ENCODE measurements at regions of chr4 and their contacts with region 1.

Region 1: DNA sequence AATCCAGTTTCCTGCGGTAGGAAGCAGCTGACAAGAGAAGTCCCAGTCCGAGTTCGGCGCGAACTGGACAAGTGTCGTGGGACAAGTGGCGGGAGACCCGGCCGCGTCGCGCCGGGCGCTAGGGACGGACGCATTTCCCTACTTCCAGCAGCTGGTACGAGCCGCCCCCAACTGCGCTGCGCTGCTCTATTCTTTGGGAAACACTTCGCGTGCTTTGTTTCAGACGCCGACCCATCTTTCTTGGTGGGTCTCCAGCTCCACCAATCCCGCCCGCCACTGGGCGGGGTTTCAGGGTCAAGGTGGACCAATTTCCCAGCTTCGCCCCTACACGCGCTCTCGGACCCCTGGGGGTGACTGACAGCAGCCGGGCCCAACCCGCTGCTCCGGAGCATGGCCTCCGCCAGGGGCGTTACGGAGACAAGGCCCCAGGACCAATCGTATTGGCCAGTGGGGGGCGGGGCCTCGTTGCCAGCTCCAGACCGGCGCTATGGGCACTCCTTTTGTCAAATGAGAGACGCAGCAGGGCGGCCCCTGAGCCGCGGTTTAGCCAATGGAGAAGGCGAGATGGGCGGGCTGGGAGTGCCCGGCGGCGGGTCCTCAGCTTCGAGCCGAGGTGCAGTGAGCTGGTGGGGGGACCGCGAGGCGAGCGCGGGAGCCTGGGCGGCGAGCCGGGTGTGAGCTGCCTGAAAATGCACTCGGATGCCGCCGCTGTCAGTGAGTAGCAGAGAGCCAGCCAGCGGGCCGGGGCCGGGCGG is at the start of gene DCUN1D4:
- DNase-seq: peak; percentile 99
- H3K4me3 ChIP-seq: peak within 1 kb of the TSS; percentile 78
- H3K27ac ChIP-seq: peak within 1 kb of the TSS; percentile 63
- H3K4me1 ChIP-seq: peaks cover 16% of the 10 kb centered on the region
- CTCF ChIP-seq: no peak
- total RNA-seq, gene DCUN1D4: 21.3 and 30.4 TPM in 2 replicates

Region 2: DNA sequence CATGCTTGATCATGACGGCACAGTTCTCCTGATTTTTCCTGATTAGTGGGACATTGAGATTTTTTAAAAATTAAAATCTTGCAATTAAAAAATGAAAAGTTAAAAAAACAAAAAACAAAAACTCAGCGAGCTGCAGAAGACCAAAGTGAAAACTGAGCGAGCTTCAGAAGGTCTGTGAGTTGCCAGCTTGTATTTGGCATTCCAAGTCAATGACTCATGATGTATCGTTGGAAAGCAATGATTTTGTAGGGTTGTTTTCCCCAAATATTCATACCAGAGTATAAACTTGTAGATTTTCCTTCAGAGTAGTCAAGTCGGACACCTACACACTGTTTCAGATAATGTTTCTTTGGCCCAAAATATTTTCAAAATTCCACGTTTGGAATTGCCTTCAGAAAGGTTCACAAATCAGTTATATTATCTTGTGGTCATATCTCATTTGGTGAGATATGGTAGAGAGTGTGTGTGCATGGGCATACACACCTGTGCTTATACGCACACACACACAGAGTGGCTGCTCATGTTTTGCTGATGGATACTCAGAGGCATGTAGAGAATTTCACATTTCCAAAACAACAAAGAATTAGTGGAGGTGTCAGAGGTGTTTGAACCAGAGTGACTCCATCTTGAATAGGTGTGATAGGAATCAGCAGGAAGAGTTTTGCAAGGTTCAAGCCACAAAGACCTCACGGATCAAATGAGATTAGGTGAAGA is 100.6 kb after region 1 on chr4:
- CTCF ChIA-PET with region 1: no interaction called
- POLR2A ChIA-PET with region 1: no interaction called
- intact Hi-C with region 1: no loop called
- DNase-seq: no peak
- H3K4me3 ChIP-seq: no peak overlapping the region
- H3K27ac ChIP-seq: no peak overlapping the region
- H3K4me1 ChIP-seq: no peaks in the 10 kb centered on the region
- CTCF ChIP-seq: no peak

Region 3: GRCh38 chr4:52038103-52038912 is 195.6 kb after region 1 on chr4 and contains the start of gene SGCB:
- CTCF ChIA-PET with region 1: interaction called, 3 read pairs
- POLR2A ChIA-PET with region 1: interaction called, 15 read pairs
- intact Hi-C with region 1: loop called (anchors 2 kb)
- DNase-seq: peak; percentile 70
- H3K4me3 ChIP-seq: peak within 1 kb of the TSS; percentile 96
- H3K27ac ChIP-seq: peak within 1 kb of the TSS; percentile 2
- H3K4me1 ChIP-seq: peaks cover 17% of the 10 kb centered on the region
- CTCF ChIP-seq: no peak
- total RNA-seq, gene SGCB: 6.0 and 7.5 TPM in 2 replicates